ENCODE measurements at regions of chr1 and their contacts with region 1.

Region 1: GRCh38 chr1:116485071-116485735 is 85.6 kb downstream of the CD58 start:
- H3K4me3 Mint-ChIP-seq: no peak overlapping the region
- H3K27ac Mint-ChIP-seq: no peak overlapping the region
- H3K4me1 Mint-ChIP-seq: peaks cover 16% of the 10 kb centered on the region
- H3K27me3 Mint-ChIP-seq: no peaks in the 10 kb centered on the region

Region 2: DNA sequence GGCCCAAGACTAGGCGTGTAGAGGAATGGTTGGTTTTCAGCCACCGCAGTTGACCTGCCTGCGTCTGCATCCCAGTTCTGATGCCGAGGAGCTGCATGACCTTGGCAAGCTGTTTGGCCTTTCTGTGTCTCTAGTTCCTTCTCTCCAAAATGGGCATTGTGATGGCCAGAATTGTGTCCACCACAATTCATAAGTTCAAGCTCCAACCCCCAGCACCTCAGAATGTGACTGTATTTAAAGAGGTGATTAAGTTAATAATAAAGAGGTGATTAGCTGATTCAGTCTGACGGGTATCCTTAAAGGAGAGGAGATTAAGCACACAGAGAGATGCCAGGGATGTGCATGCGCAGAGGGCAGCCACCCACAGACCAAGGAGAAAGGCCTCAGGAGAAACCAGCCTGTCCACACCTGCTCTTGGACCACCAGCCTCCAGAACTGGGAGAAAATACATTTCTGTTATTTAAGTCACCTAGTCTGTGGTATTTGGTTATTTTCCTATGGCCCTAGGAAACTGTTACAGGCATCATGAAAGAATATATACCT is 345.5 kb before region 1 on chr1:
- intact Hi-C with region 1: loop called (anchors 1 kb)
- H3K4me3 Mint-ChIP-seq: no peak overlapping the region
- H3K27ac Mint-ChIP-seq: no peak overlapping the region
- H3K4me1 Mint-ChIP-seq: peaks cover 6% of the 10 kb centered on the region
- H3K27me3 Mint-ChIP-seq: peaks cover 12% of the 10 kb centered on the region

Region 3: GRCh38 chr1:116360429-116361173 is 124.6 kb before region 1 on chr1:
- intact Hi-C with region 1: loop called (anchors 5 kb)
- H3K4me3 Mint-ChIP-seq: no peak overlapping the region
- H3K27ac Mint-ChIP-seq: no peak overlapping the region
- H3K4me1 Mint-ChIP-seq: peaks cover 15% of the 10 kb centered on the region
- H3K27me3 Mint-ChIP-seq: peaks cover 3% of the 10 kb centered on the region